Activated naive CD4-positive, alpha-beta T cell treated with anti-CD3 and anti-CD28 coated beads for 36 hours (primary cell): ENCODE measurements at regions of chr4 and their contacts with region 1.

Region 1: GRCh38 chr4:48033825-48034413 is 17.3 kb downstream of the NIPAL1 start:
- DNase-seq: peak; percentile 87
- H3K4me3 Mint-ChIP-seq: no peak overlapping the region
- H3K27ac Mint-ChIP-seq: no peak overlapping the region
- H3K4me1 Mint-ChIP-seq: peaks cover 56% of the 10 kb centered on the region
- H3K27me3 Mint-ChIP-seq: no peaks in the 10 kb centered on the region

Region 2: DNA sequence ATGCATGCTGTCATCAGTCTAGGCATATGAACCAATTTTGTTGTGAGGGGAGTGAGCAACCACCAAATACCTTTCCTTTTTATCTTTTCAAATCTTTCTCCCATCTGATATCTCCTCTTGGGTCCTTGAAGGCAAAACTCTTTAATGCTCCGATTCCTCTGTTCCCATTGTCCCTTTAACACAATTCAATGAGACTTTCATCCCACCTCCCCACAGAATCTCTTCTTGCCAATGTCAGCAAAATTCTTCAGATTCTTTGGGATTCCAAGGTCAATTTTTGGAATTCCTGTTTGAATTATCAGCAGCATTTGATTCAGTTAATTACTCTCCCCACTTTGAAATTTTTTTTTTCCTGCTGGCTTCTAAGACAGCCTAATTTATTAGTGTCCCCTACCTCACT is 1357.6 kb before region 1 on chr4:
- CTCF ChIA-PET with region 1: no interaction called
- intact Hi-C with region 1: no loop called
- DNase-seq: no peak
- H3K4me3 Mint-ChIP-seq: no peak overlapping the region
- H3K27ac Mint-ChIP-seq: no peak overlapping the region
- H3K4me1 Mint-ChIP-seq: no peaks in the 10 kb centered on the region
- H3K27me3 Mint-ChIP-seq: no peaks in the 10 kb centered on the region

Region 3: DNA sequence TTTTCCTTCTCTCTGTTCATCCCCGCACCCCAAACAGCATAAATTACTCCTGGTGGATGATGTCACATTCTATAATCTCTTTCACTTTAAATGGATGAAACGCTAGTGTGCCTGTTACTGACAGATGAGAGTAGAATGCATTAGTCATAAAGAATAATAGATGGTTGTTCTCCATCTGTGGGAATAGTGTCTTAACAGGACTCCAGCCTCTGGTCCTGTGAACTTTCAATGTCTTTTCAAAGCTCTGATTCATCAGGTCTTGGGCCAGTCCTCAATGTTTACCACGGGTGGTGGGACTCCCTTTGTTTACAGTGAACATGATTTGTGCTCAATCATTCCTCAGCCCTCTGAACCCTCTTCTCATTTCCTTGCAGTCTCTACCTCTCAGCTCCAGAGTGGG is 819.9 kb before region 1 on chr4:
- CTCF ChIA-PET with region 1: no interaction called
- intact Hi-C with region 1: no loop called
- DNase-seq: no peak
- H3K4me3 Mint-ChIP-seq: no peak overlapping the region
- H3K27ac Mint-ChIP-seq: no peak overlapping the region
- H3K4me1 Mint-ChIP-seq: no peaks in the 10 kb centered on the region
- H3K27me3 Mint-ChIP-seq: no peaks in the 10 kb centered on the region

Region 4: GRCh38 chr4:48002267-48002666 is 31.7 kb before region 1 on chr4:
- CTCF ChIA-PET with region 1: interaction called, 13 read pairs
- intact Hi-C with region 1: no loop called
- DNase-seq: no peak
- H3K4me3 Mint-ChIP-seq: no peak overlapping the region
- H3K27ac Mint-ChIP-seq: no peak overlapping the region
- H3K4me1 Mint-ChIP-seq: no peaks in the 10 kb centered on the region
- H3K27me3 Mint-ChIP-seq: no peaks in the 10 kb centered on the region

Region 5: DNA sequence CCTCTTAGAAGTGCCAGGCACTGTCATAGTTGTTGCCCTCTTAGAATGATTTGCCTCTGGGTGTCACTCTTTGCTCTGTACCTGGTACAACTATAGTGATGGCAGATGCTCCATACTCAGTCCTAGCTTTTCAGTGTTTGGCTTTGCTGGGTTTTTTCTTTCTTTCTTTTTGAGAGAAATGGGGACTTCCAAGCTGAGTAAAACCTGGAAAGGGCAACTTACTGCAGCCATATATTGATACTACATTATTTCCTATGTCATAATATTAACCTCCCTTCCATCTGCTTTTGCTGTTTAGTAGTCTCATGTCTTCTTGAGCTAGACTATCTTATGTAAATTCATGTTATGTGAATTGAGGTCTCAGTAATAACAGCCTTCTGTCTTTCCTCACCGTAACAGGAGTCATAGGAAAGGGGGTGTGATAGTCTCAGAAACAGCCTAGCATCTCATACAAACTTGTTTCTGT is 31.7 kb after region 1 on chr4:
- CTCF ChIA-PET with region 1: interaction called, 74 read pairs
- intact Hi-C with region 1: loop called (anchors 1 kb)
- DNase-seq: peak; percentile 48
- H3K4me3 Mint-ChIP-seq: no peak overlapping the region
- H3K27ac Mint-ChIP-seq: peak overlapping the region; percentile 44
- H3K4me1 Mint-ChIP-seq: peaks cover 36% of the 10 kb centered on the region
- H3K27me3 Mint-ChIP-seq: no peaks in the 10 kb centered on the region

Region 6: DNA sequence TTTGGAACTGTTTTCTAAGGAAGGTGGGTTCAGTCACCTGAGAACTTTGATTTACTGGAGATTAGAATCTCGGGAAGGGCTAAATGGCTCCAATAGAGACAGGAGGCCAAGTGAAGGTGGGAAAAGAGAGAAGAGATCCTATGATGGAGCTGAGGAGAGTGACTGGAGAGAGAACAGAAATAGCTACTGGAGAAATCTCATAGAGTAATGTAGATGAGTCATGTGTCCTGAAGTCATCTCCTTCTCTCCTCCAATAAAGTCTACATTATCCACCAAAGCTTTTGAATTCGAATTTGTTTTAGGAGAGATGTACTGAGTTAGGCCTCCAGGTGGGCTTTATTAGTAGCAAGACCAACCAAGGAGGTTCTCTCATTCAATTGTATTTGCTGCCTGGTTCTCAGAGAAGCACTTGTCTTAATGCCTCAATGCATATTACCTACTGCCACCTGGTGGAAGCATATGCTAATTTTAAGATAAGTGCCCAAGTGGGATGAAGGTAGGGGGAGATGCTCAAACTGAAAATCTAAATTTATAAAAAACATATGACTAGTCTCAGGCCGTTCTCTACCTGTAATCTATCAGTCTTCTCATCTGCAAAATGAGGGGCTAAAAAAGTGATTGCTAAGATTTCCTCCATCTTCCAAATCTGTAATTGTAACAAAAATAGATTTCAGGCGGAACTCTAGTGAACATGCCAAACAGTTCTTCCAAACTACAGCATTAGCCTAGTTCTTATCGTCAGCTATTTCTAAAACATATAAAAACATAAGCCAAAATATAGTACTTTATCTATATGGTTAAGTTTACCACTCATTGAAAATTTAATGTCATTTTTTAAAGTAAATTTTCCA is 75.7 kb after region 1 on chr4:
- CTCF ChIA-PET with region 1: interaction called, 26 read pairs
- intact Hi-C with region 1: no loop called
- DNase-seq: no peak
- H3K4me3 Mint-ChIP-seq: no peak overlapping the region
- H3K27ac Mint-ChIP-seq: peak overlapping the region; percentile 75
- H3K4me1 Mint-ChIP-seq: peaks cover 63% of the 10 kb centered on the region
- H3K27me3 Mint-ChIP-seq: no peaks in the 10 kb centered on the region

Region 7: DNA sequence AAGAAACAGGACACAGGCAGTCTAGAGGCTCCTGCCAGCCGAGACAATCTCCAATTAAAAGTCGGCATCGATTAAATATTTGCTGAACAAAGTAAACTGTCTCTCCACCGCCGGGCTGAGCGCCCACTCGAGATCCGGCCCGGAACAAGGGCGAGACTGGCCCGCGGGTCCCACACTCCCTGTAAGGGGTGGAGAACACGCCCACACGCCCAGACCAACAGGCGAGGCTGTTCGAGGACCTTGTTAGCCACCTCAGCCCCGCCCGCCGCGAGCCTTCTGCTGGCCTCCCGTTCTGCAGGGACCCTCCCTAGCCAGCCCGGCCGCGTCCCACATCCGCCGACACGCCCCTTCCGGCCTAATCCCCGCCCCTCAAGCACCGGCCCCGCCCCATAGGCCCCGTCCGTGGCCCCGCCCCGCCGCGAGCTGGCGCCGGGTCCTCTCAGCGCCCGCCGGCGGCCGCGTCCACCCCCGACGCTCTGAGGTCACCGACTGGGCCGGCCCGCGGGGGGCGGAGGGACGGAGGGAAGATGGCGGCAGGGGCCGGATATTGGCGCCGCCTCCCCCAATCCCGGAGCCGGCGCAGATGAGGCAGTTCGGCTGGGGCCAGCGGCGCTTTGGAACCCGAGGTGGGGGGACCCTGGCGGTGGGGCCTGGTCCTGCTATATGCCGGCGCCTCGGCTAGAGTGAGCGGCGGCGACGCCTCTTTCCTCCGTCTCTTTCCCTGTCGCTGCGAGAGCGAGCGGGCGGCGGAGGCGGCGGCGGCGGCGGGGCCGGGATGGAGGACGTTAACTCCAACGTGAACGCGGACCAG is 307.3 kb after region 1 on chr4 and contains the start of gene SLAIN2:
- CTCF ChIA-PET with region 1: no interaction called
- intact Hi-C with region 1: loop called (anchors 2 kb)
- DNase-seq: peak; percentile 98
- H3K4me3 Mint-ChIP-seq: peak within 1 kb of the TSS; percentile 97
- H3K27ac Mint-ChIP-seq: peak within 1 kb of the TSS; percentile 97
- H3K4me1 Mint-ChIP-seq: peaks cover 62% of the 10 kb centered on the region
- H3K27me3 Mint-ChIP-seq: no peaks in the 10 kb centered on the region
- total RNA-seq, gene SLAIN2: 39.7 to 42.6 TPM